Activated CD4-positive, alpha-beta T cell treated with anti-CD3 and anti-CD28 coated beads for 36 hours (primary cell): ENCODE measurements at regions of chr16 and their contacts with region 1.

Region 1: DNA sequence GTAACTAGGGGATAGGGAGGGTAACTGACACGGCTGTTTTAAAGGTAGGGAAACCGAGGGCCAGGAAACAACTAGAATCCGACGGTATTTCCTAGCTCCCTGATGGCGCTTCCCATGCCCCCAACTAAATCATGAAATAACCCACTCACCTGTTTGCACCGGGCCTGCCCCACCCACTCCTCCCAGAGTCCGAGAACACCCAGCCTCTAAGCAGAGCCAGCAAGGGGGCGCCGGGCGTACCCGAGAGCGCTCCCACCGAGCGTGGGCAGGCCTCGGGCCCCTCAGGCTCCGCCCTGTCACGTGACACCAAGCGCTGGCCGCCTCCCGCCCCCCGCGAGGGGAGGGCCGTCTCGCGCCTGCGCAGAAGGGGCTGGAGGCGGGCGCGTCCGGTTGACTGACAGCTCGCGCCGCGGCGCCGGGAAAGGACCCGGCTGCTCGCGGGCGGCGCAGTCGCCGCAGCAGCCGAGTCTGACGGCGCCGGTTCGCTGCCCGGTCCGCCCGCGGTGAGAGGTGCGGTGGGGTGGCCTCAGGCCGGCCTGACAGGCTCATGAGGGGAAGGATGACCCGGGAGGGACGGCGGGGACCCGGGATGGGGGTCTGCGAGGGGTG is at the start of gene KIAA0513:
- DNase-seq: peak; percentile 98
- ATAC-seq: peak; percentile 43
- H3K4me3 Mint-ChIP-seq: peak within 1 kb of the TSS; percentile 83
- H3K27ac Mint-ChIP-seq: peak within 1 kb of the TSS; percentile 97
- H3K4me1 Mint-ChIP-seq: peaks cover 37% of the 10 kb centered on the region
- H3K27me3 Mint-ChIP-seq: no peaks in the 10 kb centered on the region
- total RNA-seq, gene KIAA0513: 9.6 to 10.4 TPM

Region 2: GRCh38 chr16:84144859-84145639 is 882.4 kb before region 1 on chr16 and contains the starts of genes DNAAF1 and HSDL1:
- CTCF ChIA-PET with region 1: no interaction called
- POLR2A ChIA-PET with region 1: no interaction called
- intact Hi-C with region 1: loop called in 1 of 2 experiments (anchors 5 kb)
- DNase-seq: peak; percentile 96
- ATAC-seq: peak; percentile 84
- H3K4me3 Mint-ChIP-seq: peak within 1 kb of the TSS; percentile 95
- H3K27ac Mint-ChIP-seq: peak within 1 kb of the TSS; percentile 72
- H3K4me1 Mint-ChIP-seq: peaks cover 12% of the 10 kb centered on the region
- H3K27me3 Mint-ChIP-seq: peaks cover 4% of the 10 kb centered on the region
- total RNA-seq, gene DNAAF1: 0.39 TPM in 1 of 2 experiments, not detected in the other
- total RNA-seq, gene HSDL1: 7.4 to 11.4 TPM

Region 3: GRCh38 chr16:84617791-84618580 is 409.5 kb before region 1 on chr16 and contains the start of gene COTL1:
- CTCF ChIA-PET with region 1: no interaction called
- POLR2A ChIA-PET with region 1: no interaction called
- intact Hi-C with region 1: loop called in 1 of 2 experiments (anchors 5 kb)
- DNase-seq: peak; percentile 98
- ATAC-seq: peak; percentile 77
- H3K4me3 Mint-ChIP-seq: peak within 1 kb of the TSS; percentile 98
- H3K27ac Mint-ChIP-seq: peak within 1 kb of the TSS; percentile 87
- H3K4me1 Mint-ChIP-seq: peaks cover 41% of the 10 kb centered on the region
- H3K27me3 Mint-ChIP-seq: no peaks in the 10 kb centered on the region
- total RNA-seq, gene COTL1: 353 to 384 TPM

Region 4: DNA sequence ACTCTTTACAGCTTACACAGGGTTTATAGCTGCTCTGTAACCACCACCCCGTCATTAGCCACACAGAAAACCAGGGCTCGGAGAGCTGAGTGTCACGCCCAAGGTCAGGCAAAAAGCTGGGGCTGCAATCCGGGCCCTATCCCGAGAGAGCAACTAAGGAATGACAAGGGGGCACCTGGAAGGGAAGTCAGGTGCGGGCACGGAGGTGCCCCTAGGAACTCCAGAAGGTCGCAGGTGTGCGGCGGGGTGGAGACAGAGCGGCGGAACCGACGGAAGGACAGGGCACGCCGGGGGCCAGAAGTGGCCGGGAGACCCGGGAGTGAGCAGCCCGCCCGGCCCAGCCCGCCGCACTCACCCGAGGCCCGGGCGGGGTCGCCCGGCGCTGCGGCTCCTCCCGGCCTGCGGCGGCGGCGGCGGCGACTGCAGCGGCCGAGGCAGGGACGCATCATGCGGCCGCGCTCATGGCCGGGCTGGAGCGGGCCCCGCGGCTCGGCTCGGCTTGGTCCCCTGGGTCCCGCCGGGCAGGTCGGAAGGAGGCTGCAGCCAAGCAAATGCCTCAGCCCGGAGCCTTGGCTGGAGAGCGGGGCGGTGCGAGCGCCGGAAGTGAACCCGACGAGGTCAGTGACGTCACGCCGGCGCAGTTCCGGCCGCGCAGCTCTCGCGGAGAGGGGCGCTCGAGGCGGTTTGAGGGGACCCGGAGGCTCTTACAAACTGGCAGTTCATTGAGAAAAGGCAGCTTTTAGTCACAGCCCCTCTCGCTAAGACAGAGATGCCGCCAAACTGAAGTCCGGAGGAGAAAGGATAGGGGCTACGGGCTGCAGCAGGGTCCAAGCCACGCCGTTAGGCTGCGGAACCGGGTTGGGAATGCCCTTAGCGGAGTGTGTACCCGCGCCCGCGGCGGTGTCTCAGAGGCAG is 16.3 kb before region 1 on chr16 and contains the start of gene ZDHHC7:
- CTCF ChIA-PET with region 1: interaction called, 37 read pairs
- POLR2A ChIA-PET with region 1: interaction called, 3 read pairs
- intact Hi-C with region 1: loop called (anchors 1 kb)
- DNase-seq: peak; percentile 92
- ATAC-seq: peak; percentile 95
- H3K4me3 Mint-ChIP-seq: peak within 1 kb of the TSS; percentile 89
- H3K27ac Mint-ChIP-seq: peak within 1 kb of the TSS; percentile 98
- H3K4me1 Mint-ChIP-seq: peaks cover 30% of the 10 kb centered on the region
- H3K27me3 Mint-ChIP-seq: no peaks in the 10 kb centered on the region
- total RNA-seq, gene ZDHHC7: 25.1 to 27.8 TPM

Region 5: GRCh38 chr16:85040685-85041084 is 13.2 kb after region 1 on chr16:
- CTCF ChIA-PET with region 1: no interaction called
- POLR2A ChIA-PET with region 1: no interaction called
- intact Hi-C with region 1: no loop called
- DNase-seq: no peak
- ATAC-seq: no peak
- H3K4me3 Mint-ChIP-seq: no peak overlapping the region
- H3K27ac Mint-ChIP-seq: no peak overlapping the region
- H3K4me1 Mint-ChIP-seq: peaks cover 14% of the 10 kb centered on the region
- H3K27me3 Mint-ChIP-seq: no peaks in the 10 kb centered on the region

Region 6: GRCh38 chr16:85554112-85554813 is 526.8 kb after region 1 on chr16:
- CTCF ChIA-PET with region 1: no interaction called
- POLR2A ChIA-PET with region 1: no interaction called
- intact Hi-C with region 1: loop called in 1 of 2 experiments (anchors 5 kb)
- DNase-seq: peak; percentile 90
- ATAC-seq: peak; percentile 71
- H3K4me3 Mint-ChIP-seq: peak overlapping the region; percentile 81
- H3K27ac Mint-ChIP-seq: peak overlapping the region; percentile 88
- H3K4me1 Mint-ChIP-seq: peaks cover 32% of the 10 kb centered on the region
- H3K27me3 Mint-ChIP-seq: no peaks in the 10 kb centered on the region

Region 7: DNA sequence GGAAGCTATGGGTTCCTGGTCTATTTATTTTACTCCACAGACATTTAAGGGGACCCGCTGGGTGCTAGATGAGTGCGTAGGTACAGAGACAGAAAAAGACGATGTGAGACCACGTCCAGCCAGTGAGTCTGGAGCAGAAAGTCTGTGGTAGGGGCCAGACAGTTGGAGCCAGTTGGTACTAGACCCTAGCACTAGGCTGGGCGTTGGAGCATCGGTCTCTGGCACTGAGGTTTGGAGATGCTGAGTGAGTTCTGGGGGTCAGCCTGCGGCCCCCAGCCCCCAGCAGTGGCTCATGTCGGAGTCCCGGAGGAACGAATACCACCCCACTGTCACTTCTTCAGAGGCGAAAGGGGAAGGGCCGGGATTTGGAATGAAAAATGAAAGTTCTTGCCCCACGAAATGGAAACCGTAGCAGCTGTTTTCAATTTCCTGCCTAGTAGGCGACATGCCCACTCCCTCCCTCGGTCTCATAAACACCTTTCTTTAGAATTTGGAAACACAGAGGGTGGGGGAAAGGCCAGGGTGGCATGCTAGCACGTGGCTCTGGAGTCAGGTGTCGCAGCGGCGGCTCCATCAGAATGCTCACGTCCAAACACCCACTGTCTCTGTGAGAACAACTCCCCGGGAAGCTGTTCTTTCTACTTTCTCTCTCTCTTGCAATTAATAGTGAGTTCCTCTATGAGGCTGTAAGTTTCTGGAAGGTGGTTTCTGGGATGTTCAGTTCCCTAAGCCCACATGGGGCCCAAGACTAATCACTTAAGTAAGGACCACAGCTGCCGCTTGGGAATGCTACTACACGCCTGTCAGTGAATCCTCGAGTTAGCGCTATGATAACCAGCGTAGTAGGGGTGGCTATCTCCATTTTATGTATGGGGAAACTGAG is 968.3 kb after region 1 on chr16:
- CTCF ChIA-PET with region 1: no interaction called
- POLR2A ChIA-PET with region 1: no interaction called
- intact Hi-C with region 1: loop called in 1 of 2 experiments (anchors 10 kb)
- DNase-seq: peak; percentile 68
- ATAC-seq: peak; percentile 33
- H3K4me3 Mint-ChIP-seq: no peak overlapping the region
- H3K27ac Mint-ChIP-seq: peak overlapping the region; percentile 82
- H3K4me1 Mint-ChIP-seq: peaks cover 62% of the 10 kb centered on the region
- H3K27me3 Mint-ChIP-seq: peaks cover 2% of the 10 kb centered on the region